Endothelial cell of umbilical vein (primary cell): ENCODE measurements at regions of chr10 and their contacts with region 1.

Region 1: GRCh38 chr10:95792874-95793285 is 36.9 kb downstream of the ENTPD1 start:
- DNase-seq: peak; percentile 89
- H3K4me3 ChIP-seq: no peak overlapping the region
- H3K27ac ChIP-seq: peak overlapping the region; percentile 29
- H3K4me1 ChIP-seq: peaks cover 40% of the 10 kb centered on the region
- H3K27me3 ChIP-seq: no peaks in the 10 kb centered on the region
- CTCF ChIP-seq: no peak
- POLR2A ChIP-seq: no peak

Region 2: DNA sequence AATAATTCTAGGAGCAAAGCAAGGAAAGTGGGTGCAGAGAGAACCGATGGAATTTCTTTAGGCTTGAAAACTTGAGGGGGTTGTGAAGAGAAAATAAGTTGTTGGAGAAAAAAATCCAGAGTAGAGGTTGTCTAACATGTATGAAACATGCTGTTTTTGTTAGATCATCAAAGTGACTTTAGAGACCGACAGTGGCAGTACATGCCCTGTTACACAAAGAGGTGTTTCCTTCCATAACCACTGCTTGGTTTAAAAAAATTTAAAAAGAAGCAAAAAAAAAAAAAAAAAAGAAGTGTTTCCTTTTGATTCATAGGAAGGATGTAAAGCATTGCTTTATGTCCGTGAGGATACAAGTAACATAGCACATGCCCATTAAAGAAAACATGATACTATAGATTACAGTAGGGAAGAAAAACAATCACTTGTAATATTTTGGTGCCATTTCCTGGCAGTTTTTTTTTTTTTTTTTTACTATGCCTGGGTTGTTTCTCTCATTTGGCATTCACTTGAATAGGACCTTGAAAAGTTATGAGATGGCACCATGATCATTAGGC is 30.9 kb before region 1 on chr10:
- CTCF ChIA-PET with region 1: no interaction called
- POLR2A ChIA-PET with region 1: no interaction called
- dilution Hi-C with region 1: no loop called
- intact Hi-C with region 1: loop called (anchors 1 kb)
- DNase-seq: peak; percentile 79
- H3K4me3 ChIP-seq: no peak overlapping the region
- H3K27ac ChIP-seq: peak overlapping the region; percentile 16
- H3K4me1 ChIP-seq: peaks cover 29% of the 10 kb centered on the region
- H3K27me3 ChIP-seq: no peaks in the 10 kb centered on the region
- CTCF ChIP-seq: no peak
- POLR2A ChIP-seq: no peak

Region 3: DNA sequence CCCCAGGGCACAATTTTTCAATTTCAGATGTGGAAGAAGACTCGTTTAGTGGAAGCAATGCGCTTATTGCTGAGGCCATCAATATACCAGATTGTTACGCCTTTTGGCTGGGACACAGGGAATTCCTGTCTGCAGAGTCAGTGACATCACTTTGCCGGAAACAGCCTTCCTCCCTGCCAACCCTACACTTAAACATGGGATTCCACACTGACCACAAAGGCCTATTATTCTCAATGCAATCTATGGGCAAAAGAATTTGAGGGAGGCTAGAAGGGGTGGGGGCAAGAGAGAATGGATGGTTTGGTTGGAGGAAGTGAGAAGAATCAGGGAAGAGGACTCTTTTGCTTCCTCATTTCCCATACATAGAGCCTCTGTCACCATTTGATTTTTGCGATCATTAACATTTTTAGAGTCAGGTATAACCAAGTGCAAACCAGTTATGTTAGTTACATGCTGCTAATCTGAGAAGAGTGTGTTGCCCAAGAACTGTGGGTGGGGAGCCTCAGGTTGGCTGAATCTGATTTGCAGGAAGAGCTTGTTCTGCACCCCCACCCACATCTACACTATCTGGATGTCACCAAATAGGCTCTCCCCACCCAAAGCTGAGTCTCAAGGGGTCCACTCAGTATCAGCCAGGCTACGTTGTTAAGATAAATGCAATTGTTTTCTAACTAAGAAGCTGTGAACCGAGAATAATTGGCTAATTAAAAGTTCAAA is 21.3 kb after region 1 on chr10:
- CTCF ChIA-PET with region 1: interaction called, 3 read pairs
- POLR2A ChIA-PET with region 1: no interaction called
- dilution Hi-C with region 1: no loop called
- intact Hi-C with region 1: loop called (anchors 1 kb)
- DNase-seq: peak; percentile 76
- H3K4me3 ChIP-seq: no peak overlapping the region
- H3K27ac ChIP-seq: peak overlapping the region; percentile 41
- H3K4me1 ChIP-seq: peaks cover 46% of the 10 kb centered on the region
- H3K27me3 ChIP-seq: no peaks in the 10 kb centered on the region
- CTCF ChIP-seq: no peak
- POLR2A ChIP-seq: no peak

Region 4: DNA sequence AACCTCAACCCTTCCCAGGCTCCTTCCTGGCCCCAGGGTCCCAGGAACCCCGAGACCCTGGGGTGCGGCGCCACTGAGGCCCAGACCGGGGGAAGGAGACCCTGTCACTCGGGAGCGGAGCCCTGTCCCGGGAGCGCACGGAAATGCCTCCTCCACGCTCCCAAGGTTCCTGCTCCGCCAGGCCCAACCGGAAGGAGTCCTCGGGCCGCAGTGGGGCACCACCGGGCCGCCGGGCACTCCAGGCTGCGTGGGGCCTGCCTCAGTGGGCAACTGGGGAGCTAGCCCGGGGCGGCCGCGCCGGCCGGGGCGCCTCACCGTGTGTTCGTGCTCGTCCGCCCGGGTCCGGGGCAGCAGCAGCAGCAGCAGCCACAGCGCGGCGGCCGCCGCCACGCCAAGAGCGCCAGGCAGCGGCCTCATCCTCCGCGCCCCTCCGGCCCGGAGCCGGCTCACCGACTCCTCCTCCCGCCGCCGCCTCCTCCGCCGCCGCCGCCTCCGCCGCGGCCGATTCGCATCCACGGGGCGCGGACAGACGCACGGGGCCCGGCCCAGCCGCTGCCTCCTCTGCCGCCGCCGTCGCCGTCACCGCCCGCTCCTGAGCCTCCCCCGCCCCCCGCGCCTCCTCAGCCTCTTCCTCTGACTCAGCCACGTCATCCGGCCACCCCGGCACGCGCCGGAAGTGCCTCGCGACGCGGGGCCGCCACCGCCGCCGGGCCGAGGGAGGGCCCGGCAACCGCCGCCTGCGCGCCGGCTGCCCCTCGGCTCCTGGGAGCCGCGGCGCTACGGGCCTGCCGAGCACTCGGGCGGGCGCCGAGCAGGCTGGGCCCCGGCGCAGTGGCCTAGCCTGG is 793.8 kb after region 1 on chr10 and contains the start of gene TM9SF3:
- CTCF ChIA-PET with region 1: no interaction called
- POLR2A ChIA-PET with region 1: no interaction called
- dilution Hi-C with region 1: no loop called
- intact Hi-C with region 1: no loop called
- DNase-seq: peak; percentile 84
- H3K4me3 ChIP-seq: peak within 1 kb of the TSS; percentile 59 to 92 (median 61)
- H3K27ac ChIP-seq: peak within 1 kb of the TSS; percentile 98
- H3K4me1 ChIP-seq: peaks cover 53% of the 10 kb centered on the region
- H3K27me3 ChIP-seq: no peaks in the 10 kb centered on the region
- CTCF ChIP-seq: no peak
- POLR2A ChIP-seq: peak; percentile 26
- total RNA-seq, gene TM9SF3: 142 and 144 TPM in 2 replicates